GM10248 (cell line): ENCODE measurements at regions of chr12 and their contacts with region 1.

Region 1: GRCh38 chr12:14185427-14186192 is 179.9 kb upstream of the ATF7IP start:
- DNase-seq: peak; percentile 52
- CTCF ChIP-seq: peak; percentile 75

Region 2: GRCh38 chr12:14167005-14167628 is 18.5 kb before region 1 on chr12:
- CTCF ChIA-PET with region 1: interaction called, 28 read pairs
- POLR2A ChIA-PET with region 1: no interaction called
- DNase-seq: peak; percentile 65
- CTCF ChIP-seq: peak; percentile 91

Region 3: DNA sequence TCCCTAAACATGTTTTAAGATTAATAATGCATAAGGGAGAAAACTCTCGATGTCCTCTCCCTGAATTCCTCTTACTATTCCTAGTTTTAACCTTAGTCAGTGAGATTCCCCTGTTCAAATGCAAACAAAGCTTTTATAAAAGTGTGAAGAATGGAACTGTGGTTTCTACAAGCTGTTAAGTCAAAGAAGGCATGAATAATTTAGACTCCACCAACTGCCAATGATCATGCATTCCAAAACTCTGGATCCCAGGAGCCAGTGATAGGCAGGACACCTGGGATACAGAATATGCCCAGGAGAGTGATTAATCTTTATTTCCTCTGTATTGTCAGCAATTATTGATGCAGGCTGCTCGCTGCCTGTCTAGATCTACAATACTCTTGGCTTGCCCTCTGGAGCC is 10.4 kb before region 1 on chr12:
- CTCF ChIA-PET with region 1: interaction called, 22 read pairs
- POLR2A ChIA-PET with region 1: no interaction called
- DNase-seq: no peak
- CTCF ChIP-seq: no peak

Region 4: GRCh38 chr12:14199455-14200198 is 14.0 kb after region 1 on chr12:
- CTCF ChIA-PET with region 1: interaction called, 18 read pairs
- POLR2A ChIA-PET with region 1: no interaction called
- DNase-seq: no peak
- CTCF ChIP-seq: no peak

Region 5: DNA sequence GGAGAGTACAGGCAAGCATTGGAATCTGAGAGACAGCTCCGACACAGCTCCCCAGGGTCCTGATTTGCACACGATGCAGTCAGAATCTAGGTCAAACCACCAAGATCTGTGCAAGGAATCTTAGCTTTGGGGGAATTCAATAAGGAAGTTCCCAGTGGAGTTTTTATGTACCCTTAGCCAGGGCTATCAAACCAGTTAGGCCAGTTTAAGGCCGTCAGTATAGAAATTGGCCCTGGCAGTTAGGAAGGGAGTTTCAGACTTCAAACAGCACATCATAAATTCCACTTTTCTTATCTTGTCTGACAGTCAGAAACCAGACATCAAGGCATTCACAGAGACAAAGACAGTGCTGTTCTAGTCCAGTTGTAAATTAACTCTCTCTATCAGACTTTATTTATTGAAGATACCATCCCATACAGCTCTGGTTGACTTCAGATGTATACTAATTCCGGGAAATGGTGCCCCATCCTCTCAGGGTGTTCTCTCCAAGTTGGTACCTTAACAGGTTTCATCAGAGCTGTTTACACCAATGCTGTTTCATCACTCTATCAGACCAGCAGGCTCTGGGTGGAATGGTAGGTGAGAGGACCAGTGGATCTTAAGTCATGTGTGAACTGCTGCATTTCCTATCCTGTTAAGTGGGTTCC is 22.4 kb after region 1 on chr12:
- CTCF ChIA-PET with region 1: interaction called, 15 read pairs
- POLR2A ChIA-PET with region 1: no interaction called
- DNase-seq: no peak
- CTCF ChIP-seq: no peak

Region 6: GRCh38 chr12:14216405-14217294 is 31.0 kb after region 1 on chr12:
- CTCF ChIA-PET with region 1: interaction called, 15 read pairs
- POLR2A ChIA-PET with region 1: no interaction called
- DNase-seq: no peak
- CTCF ChIP-seq: no peak